ENCODE measurements at regions of chr18 and their contacts with region 1.

Region 1: DNA sequence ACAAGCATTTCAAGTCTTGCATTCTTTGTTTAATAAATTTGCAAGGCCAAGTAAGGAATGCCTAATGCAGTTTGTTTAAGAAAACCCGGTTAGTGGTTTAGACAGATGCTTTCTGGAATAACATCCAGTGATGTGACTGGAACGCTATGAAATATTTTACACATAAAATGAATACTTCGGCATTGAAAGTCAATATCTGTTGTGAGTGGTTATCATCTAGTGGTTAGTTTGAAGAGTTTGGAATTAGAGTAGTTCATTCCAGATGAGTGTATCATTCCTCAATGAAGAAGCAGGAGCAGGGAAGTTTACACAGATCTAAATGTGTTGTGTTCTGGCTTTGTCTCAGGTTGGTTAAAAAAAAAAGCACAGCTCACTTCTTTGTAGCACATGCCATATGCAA is 608.0 kb upstream of the PIK3C3 start:
- DNase-seq: peak; percentile 94
- ATAC-seq: peak; percentile 96
- H3K4me3 ChIP-seq: no peak overlapping the region
- H3K27ac ChIP-seq: peak overlapping the region; percentile 15; the same call in 1 of the 2 replicates
- H3K4me1 ChIP-seq: peaks cover 2% of the 10 kb centered on the region; the same call in 1 of the 2 replicates
- H3K27me3 ChIP-seq: no peaks in the 10 kb centered on the region; the same call in 1 of the 2 replicates
- CTCF ChIP-seq: no peak
- POLR2A ChIP-seq: no peak
- RAD21 ChIP-seq: no peak

Region 2: GRCh38 chr18:40877096-40877495 is 470.0 kb before region 1 on chr18:
- CTCF ChIA-PET with region 1: no interaction called
- POLR2A ChIA-PET with region 1: no interaction called
- dilution Hi-C with region 1: no loop called
- in situ Hi-C with region 1: no loop called
- intact Hi-C with region 1: loop called (anchors 2 kb)
- DNase-seq: peak; percentile 97
- ATAC-seq: peak; percentile 95
- H3K4me3 ChIP-seq: no peak overlapping the region
- H3K27ac ChIP-seq: peak overlapping the region; percentile 75
- H3K4me1 ChIP-seq: peaks cover 12% of the 10 kb centered on the region
- H3K27me3 ChIP-seq: no peaks in the 10 kb centered on the region
- CTCF ChIP-seq: no peak
- POLR2A ChIP-seq: no peak
- RAD21 ChIP-seq: no peak; the same call in 1 of the 2 replicates

Region 3: GRCh38 chr18:41121116-41121826 is 225.8 kb before region 1 on chr18:
- CTCF ChIA-PET with region 1: no interaction called
- POLR2A ChIA-PET with region 1: no interaction called
- dilution Hi-C with region 1: no loop called
- in situ Hi-C with region 1: no loop called
- intact Hi-C with region 1: loop called (anchors 10 kb)
- DNase-seq: peak; percentile 84
- ATAC-seq: peak; percentile 89
- H3K4me3 ChIP-seq: no peak overlapping the region
- H3K27ac ChIP-seq: peak overlapping the region; percentile 29; the same call in 1 of the 2 replicates
- H3K4me1 ChIP-seq: peaks cover 3% of the 10 kb centered on the region; the same call in 1 of the 2 replicates
- H3K27me3 ChIP-seq: no peaks in the 10 kb centered on the region
- CTCF ChIP-seq: no peak
- POLR2A ChIP-seq: no peak
- RAD21 ChIP-seq: no peak

Measured in IMR-90 (cell line).